ENCODE measurements at regions of chr6 and their contacts with region 1.

Region 1: GRCh38 chr6:89242574-89243330 is 25.6 kb upstream of the GABRR1 start:
- DNase-seq: peak; percentile 33 to 81
- H3K4me3 ChIP-seq: no peak overlapping the region
- H3K4me1 ChIP-seq: no peaks in the 10 kb centered on the region; the same call in 1 of the 2 replicates
- H3K27me3 ChIP-seq: peaks cover 20% of the 10 kb centered on the region

Region 2: GRCh38 chr6:88982720-88983119 is 260.0 kb before region 1 on chr6:
- in situ Hi-C with region 1: loop called (anchors 5 kb)
- DNase-seq: peak in 1 of 2 experiments; percentile 80
- H3K4me3 ChIP-seq: no peak overlapping the region
- H3K4me1 ChIP-seq: no peaks in the 10 kb centered on the region
- H3K27me3 ChIP-seq: no peaks in the 10 kb centered on the region; the same call in 1 of the 2 replicates